Heart left ventricle (tissue), 16 donors: ENCODE measurements at regions of chr19 and their contacts with region 1.

Region 1: GRCh38 chr19:588093-588740 is 1.5 kb upstream of the HCN2 start:
- DNase-seq: peak; percentile 73 to 87 (median 84)
- ATAC-seq: peak; percentile 14 to 62 (median 31)
- H3K4me3 ChIP-seq: peak overlapping the region in 1 of 12 donors; percentile 16
- H3K27ac ChIP-seq: peak overlapping the region in 8 of 12 donors; percentile 10 to 69 (median 32)
- H3K4me1 ChIP-seq: peaks cover 0 to 42% (median 21%) of the 10 kb centered on the region in 12 donors
- H3K27me3 ChIP-seq: peaks cover 15 to 51% (median 29%) of the 10 kb centered on the region in 9 donors
- CTCF ChIP-seq: peak; percentile 32 to 61 (median 43)
- POLR2A ChIP-seq: no peak

Region 2: GRCh38 chr19:572140-572742 is 16.0 kb before region 1 on chr19 and contains the start of gene BSG:
- intact Hi-C with region 1: no loop called
- DNase-seq: peak; percentile 99
- ATAC-seq: peak; percentile 52 to 78 (median 74)
- H3K4me3 ChIP-seq: peak within 1 kb of the TSS; percentile 71 to 100 (median 98)
- H3K27ac ChIP-seq: peak within 1 kb of the TSS; percentile 85 to 99 (median 96)
- H3K4me1 ChIP-seq: peaks cover 0 to 53% (median 42%) of the 10 kb centered on the region in 12 donors
- H3K27me3 ChIP-seq: no peaks in the 10 kb centered on the region
- CTCF ChIP-seq: no peak
- POLR2A ChIP-seq: peak; percentile 96 to 99
- total RNA-seq, gene BSG: 1,160 to 2,590 (median 1,462) TPM

Region 3: DNA sequence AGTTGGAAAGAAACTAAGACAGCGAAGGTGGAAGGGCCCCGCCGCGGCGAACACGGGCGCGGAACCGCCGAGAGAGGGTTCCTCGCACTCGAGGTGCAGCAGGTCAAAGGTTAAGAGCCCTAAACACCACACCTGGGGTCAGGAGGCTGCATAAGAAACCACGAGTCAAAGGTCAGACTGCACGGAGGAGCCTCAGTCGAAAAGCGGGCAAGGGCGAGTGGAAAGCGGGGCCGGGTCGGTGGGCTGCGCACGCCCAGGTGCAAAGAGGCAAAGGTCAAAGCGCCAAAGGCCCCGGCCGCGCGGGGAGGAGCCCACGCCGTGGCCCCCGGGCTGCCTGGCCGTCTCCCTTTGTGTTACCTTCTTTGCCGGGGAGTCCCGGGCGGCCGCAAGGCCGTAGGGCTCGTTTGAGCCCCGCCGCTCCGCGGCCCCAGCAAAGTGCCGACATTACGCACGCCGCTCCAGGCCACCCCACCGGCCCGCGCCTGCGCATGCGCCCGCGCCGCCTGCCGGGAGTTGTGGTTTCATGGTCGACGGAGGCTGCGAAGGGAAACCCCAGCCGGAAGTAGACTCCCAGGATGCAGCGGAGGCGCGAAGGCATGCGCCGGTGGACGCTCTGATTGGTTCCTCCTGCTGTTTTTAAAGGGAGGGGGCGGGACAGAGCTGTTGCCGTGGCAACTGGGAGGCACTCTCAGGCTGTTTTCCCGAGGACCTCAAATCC is 45.0 kb after region 1 on chr19 and contains the start of gene POLRMT:
- intact Hi-C with region 1: loop called in 1 of 10 experiments (anchors 5 kb)
- DNase-seq: peak; percentile 98 to 99 (median 99)
- ATAC-seq: peak; percentile 95 to 98 (median 98)
- H3K4me3 ChIP-seq: peak within 1 kb of the TSS; percentile 57 to 99 (median 96)
- H3K27ac ChIP-seq: peak within 1 kb of the TSS in 11 of 12 donors; percentile 57 to 86 (median 79)
- H3K4me1 ChIP-seq: peaks cover 6 to 28% (median 17%) of the 10 kb centered on the region in 12 donors
- H3K27me3 ChIP-seq: no peaks in the 10 kb centered on the region
- CTCF ChIP-seq: peak in 6 of 12 donors; percentile 9 to 50 (median 18)
- POLR2A ChIP-seq: peak in 1 of 2 donors; percentile 36
- total RNA-seq, gene POLRMT: 32.0 to 78.0 (median 41.5) TPM

Region 4: GRCh38 chr19:788983-789700 is 200.9 kb after region 1 on chr19:
- intact Hi-C with region 1: no loop called
- DNase-seq: peak in 4 of 5 donors; percentile 75 to 80 (median 78)
- ATAC-seq: peak; percentile 50 to 88 (median 78)
- H3K4me3 ChIP-seq: peak overlapping the region in 9 of 12 donors; percentile 11 to 28 (median 15)
- H3K27ac ChIP-seq: peak overlapping the region; percentile 57 to 86 (median 75)
- H3K4me1 ChIP-seq: peaks cover 7 to 59% (median 32%) of the 10 kb centered on the region in 12 donors
- H3K27me3 ChIP-seq: no peaks in the 10 kb centered on the region
- CTCF ChIP-seq: peak in 2 of 12 donors; percentile 7 to 22
- POLR2A ChIP-seq: no peak